Psoas muscle (tissue), 8 donors: ENCODE measurements at regions of chr19 and their contacts with region 1.

Region 1: DNA sequence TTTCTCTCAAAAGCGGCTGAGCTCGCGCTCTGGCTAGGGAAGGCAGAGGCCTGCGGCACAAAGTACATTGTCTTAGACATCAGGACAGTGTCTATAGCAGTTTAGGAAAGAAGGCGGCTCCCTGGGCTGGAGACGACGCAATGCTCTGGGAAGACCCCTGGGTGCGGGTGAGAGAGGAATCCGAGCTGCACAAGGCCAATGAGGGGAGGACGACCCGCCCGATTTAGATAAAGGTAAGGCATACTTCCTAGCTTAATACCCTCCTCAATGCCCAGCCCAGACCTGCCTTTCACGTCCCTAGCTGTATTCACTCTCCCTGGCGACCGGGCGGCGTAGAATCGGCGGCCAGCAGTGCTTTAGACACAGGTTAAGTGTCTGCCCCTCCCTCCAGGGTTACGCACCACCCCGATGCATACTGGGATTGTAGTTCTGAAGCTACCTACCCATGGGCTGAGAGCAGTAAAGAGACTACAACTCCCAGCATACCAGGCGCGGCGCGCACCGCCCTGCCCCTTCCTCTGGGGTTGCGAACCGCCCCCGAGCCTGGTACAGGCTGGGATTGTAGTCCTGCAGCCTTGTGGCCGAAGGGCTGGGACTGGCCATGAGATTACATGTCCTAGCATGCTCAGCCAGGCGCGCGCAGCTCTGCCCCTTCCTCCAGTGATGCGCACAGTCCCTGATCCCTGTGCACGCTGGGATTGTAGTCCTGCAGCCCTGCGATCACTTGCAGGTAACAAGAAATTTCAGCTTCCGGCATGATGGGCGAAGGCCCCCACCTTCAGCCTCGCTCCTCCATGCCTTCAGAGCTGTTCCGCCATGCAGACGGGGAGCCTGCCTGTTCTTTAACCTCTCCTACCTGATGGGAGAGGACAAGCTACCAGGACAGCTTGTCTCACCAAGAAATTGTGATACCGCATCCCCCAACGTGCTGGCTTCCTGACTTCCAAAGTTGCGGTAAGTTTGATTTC is 43.4 kb upstream of the ZNF14 start:
- DNase-seq: peak; percentile 96 to 98
- ATAC-seq: peak; percentile 99 to 100 (median 100)
- H3K4me3 ChIP-seq: peak overlapping the region; percentile 83
- H3K27ac ChIP-seq: peak overlapping the region; percentile 83
- H3K4me1 ChIP-seq: peaks cover 16% of the 10 kb centered on the region
- H3K27me3 ChIP-seq: no peaks in the 10 kb centered on the region
- CTCF ChIP-seq: no peak

Region 2: DNA sequence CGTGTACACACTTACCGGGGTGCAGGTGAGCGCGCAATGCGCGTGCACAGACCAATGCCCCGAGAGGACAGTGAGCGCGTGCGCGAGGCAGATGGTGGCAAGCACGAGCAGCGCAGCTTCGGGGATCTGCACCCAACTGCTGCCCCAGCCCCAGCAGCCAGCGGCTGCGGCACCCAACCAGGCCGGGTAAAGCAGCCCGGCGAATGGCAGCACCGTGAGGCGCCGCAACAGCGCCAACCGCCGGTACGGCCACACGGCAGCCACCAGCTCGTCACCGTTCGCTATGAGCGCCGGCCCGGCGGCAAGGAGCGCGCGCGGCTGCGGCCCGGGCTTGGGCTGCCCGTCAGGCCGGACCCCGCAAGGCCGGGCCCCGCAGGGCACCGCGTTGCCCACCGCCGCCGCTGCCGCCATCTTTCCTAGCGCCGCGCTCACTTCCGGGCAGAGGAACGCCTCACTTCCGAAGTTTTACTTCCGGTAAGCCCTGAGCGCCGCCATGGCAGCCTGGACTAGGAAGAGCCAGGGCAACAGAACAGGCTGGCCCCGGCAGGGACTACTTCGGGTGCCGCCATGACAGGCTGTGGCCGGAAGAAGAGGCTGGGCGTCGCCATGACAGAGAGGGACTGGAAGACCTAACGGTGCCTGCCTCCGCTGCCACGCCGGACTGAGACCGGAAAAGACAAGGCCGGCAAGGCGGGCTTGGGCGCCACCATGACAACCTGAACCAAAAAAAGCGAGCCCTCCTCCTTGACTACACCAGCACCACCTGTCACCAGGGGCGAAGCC is 112.9 kb before region 1 on chr19 and contains the start of gene ATP13A1:
- intact Hi-C with region 1: loop called (anchors 5 kb)
- DNase-seq: peak; percentile 96 to 99
- ATAC-seq: peak; percentile 92 to 96 (median 95)
- H3K4me3 ChIP-seq: peak within 1 kb of the TSS; percentile 99
- H3K27ac ChIP-seq: peak within 1 kb of the TSS; percentile 93
- H3K4me1 ChIP-seq: peaks cover 14% of the 10 kb centered on the region
- H3K27me3 ChIP-seq: no peaks in the 10 kb centered on the region
- CTCF ChIP-seq: peak; percentile 23
- total RNA-seq, gene ATP13A1: 17.5 to 27.5 (median 21.4) TPM